PC-9 (cell line): ENCODE measurements at regions of chr10 and their contacts with region 1.

Region 1: GRCh38 chr10:99506416-99506815 is 26.3 kb upstream of the NKX2-3 start:
- DNase-seq: no peak
- H3K4me3 ChIP-seq: no peak overlapping the region
- H3K27ac ChIP-seq: no peak overlapping the region
- H3K4me1 ChIP-seq: no peaks in the 10 kb centered on the region
- H3K27me3 ChIP-seq: peaks cover 11% of the 10 kb centered on the region
- CTCF ChIP-seq: no peak

Region 2: DNA sequence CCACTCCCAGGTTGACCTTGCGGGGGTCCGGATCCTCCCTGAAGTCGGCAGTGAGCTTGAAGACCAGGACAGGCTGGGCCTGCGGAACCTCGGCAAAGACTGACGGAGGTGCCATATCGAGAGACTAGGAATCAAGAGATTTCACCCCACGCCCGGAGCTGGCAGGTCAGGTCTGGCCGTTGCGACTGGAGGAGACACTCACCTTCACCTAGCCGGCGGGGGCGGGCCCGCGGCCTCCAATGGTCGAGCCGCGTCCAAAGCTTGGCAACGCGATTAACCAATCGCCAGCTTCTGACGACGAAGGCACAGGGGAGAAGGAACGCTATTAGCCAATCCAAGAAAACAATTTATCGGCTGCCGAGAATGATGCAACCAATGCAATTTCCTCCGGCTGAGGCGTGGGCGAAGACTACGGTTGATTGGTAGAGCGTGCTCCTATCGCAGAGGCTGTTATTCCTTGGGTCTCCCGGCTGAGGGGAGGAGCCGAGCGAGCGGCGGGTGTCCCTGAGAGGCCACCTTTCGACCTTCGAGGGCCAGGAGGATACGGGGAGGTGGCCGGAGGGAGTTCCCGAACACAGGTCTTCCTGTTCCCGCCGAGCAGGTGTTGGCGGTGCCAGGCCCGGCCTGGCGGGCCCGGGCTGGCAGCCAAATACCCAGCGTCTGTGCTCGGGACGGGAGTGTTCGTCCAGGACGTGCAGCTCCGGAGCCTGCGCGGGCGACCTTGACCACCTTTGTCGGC is 75.8 kb before region 1 on chr10 and contains the start of gene GOT1:
- CTCF ChIA-PET with region 1: no interaction called
- POLR2A ChIA-PET with region 1: no interaction called
- intact Hi-C with region 1: no loop called
- DNase-seq: peak; percentile 88 to 96
- H3K4me3 ChIP-seq: peak within 1 kb of the TSS; percentile 88
- H3K27ac ChIP-seq: peak within 1 kb of the TSS; percentile 71
- H3K4me1 ChIP-seq: no peaks in the 10 kb centered on the region
- H3K27me3 ChIP-seq: no peaks in the 10 kb centered on the region
- CTCF ChIP-seq: no peak
- total RNA-seq, gene GOT1: 27.5 and 28.6 TPM in 2 replicates

Region 3: DNA sequence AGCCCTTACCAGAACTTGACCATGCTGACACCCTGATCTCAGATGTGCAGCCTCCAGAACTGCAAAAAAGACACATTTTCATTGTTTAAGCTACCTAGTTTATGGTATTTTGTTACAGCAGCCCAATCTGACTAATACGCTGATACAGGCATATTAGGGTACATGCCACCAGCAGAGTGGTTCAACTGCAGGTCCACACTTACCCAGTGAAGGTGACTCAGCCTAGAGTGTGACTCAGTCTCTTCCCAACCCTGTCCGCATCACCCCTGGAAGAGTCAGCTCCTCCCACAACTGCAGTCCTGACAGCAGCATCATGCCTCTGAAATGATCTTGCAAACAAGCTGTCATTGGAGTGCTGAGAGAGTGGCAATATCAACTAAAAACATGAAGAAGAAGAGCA is 45.2 kb before region 1 on chr10:
- CTCF ChIA-PET with region 1: interaction called, 12 read pairs
- POLR2A ChIA-PET with region 1: no interaction called
- intact Hi-C with region 1: no loop called
- DNase-seq: no peak
- H3K4me3 ChIP-seq: no peak overlapping the region
- H3K27ac ChIP-seq: no peak overlapping the region
- H3K4me1 ChIP-seq: no peaks in the 10 kb centered on the region
- H3K27me3 ChIP-seq: no peaks in the 10 kb centered on the region
- CTCF ChIP-seq: no peak

Region 4: DNA sequence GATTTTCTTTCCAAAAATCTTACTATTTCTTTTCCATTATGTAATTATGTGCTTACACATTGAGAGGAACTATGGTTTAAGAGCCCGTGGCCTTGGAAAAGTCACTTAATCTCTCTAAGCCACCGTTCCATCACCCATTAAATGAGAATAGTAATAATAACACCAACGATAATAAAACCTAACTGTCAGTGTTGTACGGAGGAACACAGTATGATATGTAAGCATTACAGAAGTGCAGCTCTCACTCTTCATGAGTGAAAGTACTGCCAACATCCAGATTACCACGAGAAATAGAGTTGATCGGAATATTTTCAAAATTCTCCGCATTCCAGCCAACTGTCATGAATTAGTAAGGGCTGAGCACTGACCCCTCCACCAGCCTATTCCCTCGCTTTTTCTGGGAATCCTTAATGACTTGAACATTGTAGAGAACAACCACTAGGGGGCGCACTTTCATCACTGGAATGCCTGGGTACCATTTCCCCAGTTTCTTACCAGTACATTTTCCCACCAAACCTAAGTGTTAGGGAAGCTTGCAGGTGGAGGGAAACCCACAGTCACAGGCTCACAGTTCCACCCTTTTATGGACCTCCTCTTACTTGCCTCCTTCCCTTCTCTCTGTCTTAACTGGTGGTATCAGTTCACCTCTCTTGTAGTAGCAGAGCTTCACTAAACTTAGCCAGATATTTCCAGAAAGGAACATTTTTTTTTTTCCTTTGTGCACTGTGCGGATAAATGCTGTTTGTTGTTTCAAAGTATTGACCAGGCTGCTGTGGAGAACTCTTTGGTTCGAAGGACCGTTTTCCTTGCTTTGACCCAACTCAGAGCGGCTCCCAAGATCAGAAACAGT is 54.1 kb after region 1 on chr10:
- CTCF ChIA-PET with region 1: no interaction called
- POLR2A ChIA-PET with region 1: no interaction called
- intact Hi-C with region 1: no loop called
- DNase-seq: peak in 1 of 2 experiments; percentile 22
- H3K4me3 ChIP-seq: no peak overlapping the region
- H3K27ac ChIP-seq: no peak overlapping the region
- H3K4me1 ChIP-seq: no peaks in the 10 kb centered on the region
- H3K27me3 ChIP-seq: no peaks in the 10 kb centered on the region
- CTCF ChIP-seq: peak; percentile 82

Region 5: DNA sequence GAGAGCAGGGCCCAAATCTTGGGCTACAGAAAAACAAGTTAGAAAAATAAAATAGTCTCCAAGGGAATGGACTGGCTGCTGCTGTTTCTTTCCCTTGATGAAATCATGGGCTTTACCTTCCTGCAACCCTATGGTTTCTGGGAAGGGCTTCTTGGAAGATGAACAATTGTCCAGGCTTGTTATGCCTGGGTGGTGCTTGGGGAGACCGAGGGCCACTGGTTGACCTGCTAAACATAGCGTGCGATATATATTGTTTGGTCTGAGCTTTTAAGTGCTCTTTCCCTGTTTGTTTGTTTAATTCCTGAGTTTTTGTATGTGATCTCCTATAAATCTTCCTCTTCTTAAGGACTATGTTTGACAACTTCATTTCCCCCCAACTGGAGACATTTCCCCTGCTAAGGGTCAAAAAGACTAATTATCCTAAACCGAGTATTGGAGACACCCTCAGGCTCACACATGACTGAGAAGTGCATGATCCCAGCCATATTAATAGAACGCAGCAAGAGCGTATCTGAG is 75.9 kb after region 1 on chr10:
- CTCF ChIA-PET with region 1: no interaction called
- POLR2A ChIA-PET with region 1: no interaction called
- intact Hi-C with region 1: no loop called
- DNase-seq: no peak
- H3K4me3 ChIP-seq: no peak overlapping the region
- H3K27ac ChIP-seq: no peak overlapping the region
- H3K4me1 ChIP-seq: no peaks in the 10 kb centered on the region
- H3K27me3 ChIP-seq: no peaks in the 10 kb centered on the region
- CTCF ChIP-seq: no peak

Region 6: DNA sequence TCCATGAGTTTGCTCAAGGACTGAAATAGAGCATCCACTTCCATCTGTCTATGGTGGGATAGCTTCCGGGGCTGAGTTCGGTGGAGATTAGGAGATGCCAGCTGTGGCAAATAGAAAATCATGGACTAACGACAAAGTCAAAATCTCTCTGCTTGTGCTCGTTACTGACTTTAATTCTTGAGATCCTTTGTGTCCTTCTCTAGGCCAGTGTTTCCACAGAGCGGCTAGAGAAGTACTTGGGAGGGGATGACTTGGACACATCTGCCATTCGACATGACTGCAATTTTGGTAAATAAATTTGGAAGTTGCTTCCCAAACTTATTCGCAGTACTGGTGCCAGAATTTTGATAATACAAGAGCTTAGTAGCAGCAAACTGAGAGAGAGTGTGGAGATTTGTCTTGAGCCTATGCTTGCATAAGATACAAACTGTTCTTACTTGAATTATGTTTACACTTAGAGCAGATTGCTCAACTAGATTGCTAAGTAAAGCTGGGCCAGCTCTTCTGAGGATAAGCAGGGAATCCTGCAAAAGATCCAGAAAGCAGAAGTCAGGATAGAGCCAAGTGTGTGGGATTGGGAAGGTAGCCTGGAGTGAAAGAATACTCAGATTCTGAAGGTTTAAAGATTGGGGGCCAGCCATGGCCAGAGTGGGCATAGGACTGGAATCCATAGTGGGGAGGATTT is 303.7 kb after region 1 on chr10:
- CTCF ChIA-PET with region 1: no interaction called
- POLR2A ChIA-PET with region 1: no interaction called
- intact Hi-C with region 1: no loop called
- DNase-seq: no peak
- H3K4me3 ChIP-seq: no peak overlapping the region
- H3K27ac ChIP-seq: no peak overlapping the region
- H3K4me1 ChIP-seq: no peaks in the 10 kb centered on the region
- H3K27me3 ChIP-seq: no peaks in the 10 kb centered on the region
- CTCF ChIP-seq: no peak